Gastrocnemius medialis (tissue), 4 donors: ENCODE measurements at regions of chr1 and their contacts with region 1.

Region 1: DNA sequence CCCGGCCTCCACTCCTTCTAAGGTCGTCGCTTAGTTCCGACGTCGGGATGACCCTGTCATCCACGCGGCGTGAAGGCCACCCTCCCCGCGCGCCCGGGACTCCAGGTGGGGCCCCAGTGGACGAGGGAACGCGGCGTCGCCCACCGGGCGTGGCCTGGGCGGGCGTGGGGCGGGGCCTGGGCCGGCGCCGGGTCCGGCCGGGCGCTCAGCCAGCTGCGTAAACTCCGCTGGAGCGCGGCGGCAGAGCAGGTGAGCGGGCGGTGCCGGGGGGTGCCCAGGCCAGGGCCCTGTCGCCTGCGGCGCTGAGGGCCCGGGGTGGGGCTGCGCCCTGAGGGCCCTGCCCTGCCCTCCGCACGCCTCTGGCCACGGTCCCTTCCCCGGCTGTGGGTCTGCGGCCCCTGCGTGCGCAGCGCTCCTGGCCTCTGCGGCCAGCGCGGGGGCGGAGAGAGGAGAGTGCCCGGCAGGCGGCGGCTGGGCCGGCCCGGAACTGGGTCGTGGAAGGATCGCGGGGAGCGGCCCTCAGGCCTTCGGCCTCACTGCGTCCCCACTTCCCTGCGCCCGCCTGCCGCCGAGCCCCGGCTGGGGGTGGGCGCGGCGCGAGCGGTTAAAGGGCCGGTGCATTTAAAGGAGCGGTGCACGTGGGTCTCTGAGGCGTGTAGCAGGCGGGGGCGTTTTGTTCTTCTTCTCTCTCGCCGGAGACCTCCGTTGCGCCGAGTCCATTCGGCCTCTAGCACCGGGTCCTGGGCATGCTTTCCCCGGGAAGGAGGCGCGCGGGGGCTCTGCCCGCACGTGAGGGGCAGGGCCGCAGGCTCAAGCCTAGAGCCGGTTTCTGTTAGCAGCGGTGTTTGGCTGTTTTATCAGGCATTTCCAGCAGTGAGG is at the start of gene PSEN2:
- DNase-seq: peak; percentile 55 to 77
- ATAC-seq: peak; percentile 71 to 88
- H3K4me3 ChIP-seq: peak within 1 kb of the TSS; percentile 72 to 91 (median 88)
- H3K27ac ChIP-seq: peak within 1 kb of the TSS; percentile 71 to 94 (median 90)
- H3K4me1 ChIP-seq: peaks cover 32 to 36% of the 10 kb centered on the region in 2 donors
- H3K27me3 ChIP-seq: no peaks in the 10 kb centered on the region
- CTCF ChIP-seq: peak in 3 of 5 experiments; percentile 16 to 42 (median 35)
- POLR2A ChIP-seq: peak; percentile 69 to 70
- total RNA-seq, gene PSEN2: 24.8 to 41.4 (median 34.1) TPM

Region 2: GRCh38 chr1:226920446-226920894 is 49.8 kb after region 1 on chr1:
- in situ Hi-C with region 1: no loop called
- intact Hi-C with region 1: loop called (anchors 2 kb)
- DNase-seq: peak; percentile 96 to 99
- ATAC-seq: peak; percentile 83 to 87
- H3K4me3 ChIP-seq: no peak overlapping the region
- H3K27ac ChIP-seq: peak overlapping the region; percentile 92 to 97 (median 94)
- H3K4me1 ChIP-seq: peaks cover 18 to 49% of the 10 kb centered on the region in 2 donors
- H3K27me3 ChIP-seq: no peaks in the 10 kb centered on the region
- CTCF ChIP-seq: peak in 1 of 5 experiments; percentile 16
- POLR2A ChIP-seq: peak; percentile 36 to 74